Thyroid gland (tissue), 4 donors: ENCODE measurements at regions of chr9 and their contacts with region 1.

Region 1: DNA sequence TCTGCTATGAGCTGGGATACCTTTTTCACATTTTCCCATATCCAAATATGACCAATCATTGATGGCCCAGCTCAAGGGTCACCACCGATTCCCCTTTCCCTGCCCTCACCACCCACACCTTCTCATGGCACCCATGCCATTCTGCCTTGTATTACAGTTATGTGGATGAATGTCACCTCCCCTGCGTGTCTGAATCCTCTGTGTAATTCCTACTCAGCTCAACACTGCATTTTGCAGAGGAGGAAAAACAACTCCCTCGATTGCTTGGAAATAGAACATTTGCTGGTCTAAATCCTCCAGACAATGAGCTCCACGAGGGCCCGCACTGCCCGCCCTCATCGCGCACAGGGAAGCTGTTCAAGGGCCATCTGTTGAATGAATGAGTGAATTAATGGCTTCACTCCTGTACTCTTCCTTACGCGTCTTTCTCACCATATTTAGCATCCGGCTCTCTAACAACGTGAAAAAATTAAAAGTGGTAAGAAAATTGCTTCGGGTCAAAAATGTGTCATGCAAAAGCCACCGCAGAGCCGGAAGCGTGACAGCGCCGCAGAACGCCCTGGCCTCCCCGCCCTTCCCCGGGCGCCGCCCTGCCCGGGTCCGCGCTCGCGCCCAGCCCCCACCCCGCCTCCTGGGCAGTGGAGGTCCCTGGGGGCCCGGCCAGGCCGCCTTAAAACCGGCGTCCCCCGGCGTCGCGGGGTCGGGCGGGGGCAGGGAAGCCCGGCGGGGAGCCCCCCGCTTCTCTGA is 706 bp downstream of the SUSD1 start:
- DNase-seq: peak; percentile 58 to 61
- H3K4me3 ChIP-seq: peak overlapping the region in 2 of 3 donors; percentile 60 to 68
- H3K27ac ChIP-seq: no peak overlapping the region
- H3K4me1 ChIP-seq: peaks cover 5 to 19% of the 10 kb centered on the region in 2 donors
- H3K27me3 ChIP-seq: no peaks in the 10 kb centered on the region
- CTCF ChIP-seq: no peak
- POLR2A ChIP-seq: no peak

Region 2: GRCh38 chr9:111572950-111573604 is 601.3 kb before region 1 on chr9:
- intact Hi-C with region 1: no loop called
- DNase-seq: no peak
- H3K4me3 ChIP-seq: no peak overlapping the region
- H3K27ac ChIP-seq: no peak overlapping the region
- H3K4me1 ChIP-seq: no peaks in the 10 kb centered on the region
- H3K27me3 ChIP-seq: no peaks in the 10 kb centered on the region
- CTCF ChIP-seq: no peak
- POLR2A ChIP-seq: no peak

Region 3: GRCh38 chr9:112233768-112234167 is 59.4 kb after region 1 on chr9:
- intact Hi-C with region 1: no loop called
- DNase-seq: no peak
- H3K4me3 ChIP-seq: no peak overlapping the region
- H3K27ac ChIP-seq: no peak overlapping the region
- H3K4me1 ChIP-seq: no peaks in the 10 kb centered on the region
- H3K27me3 ChIP-seq: no peaks in the 10 kb centered on the region
- CTCF ChIP-seq: no peak
- POLR2A ChIP-seq: no peak

Region 4: GRCh38 chr9:112327718-112328464 is 153.5 kb after region 1 on chr9:
- intact Hi-C with region 1: loop called (anchors 10 kb)
- DNase-seq: no peak
- H3K4me3 ChIP-seq: no peak overlapping the region
- H3K27ac ChIP-seq: peak overlapping the region in 1 of 3 donors; percentile 1
- H3K4me1 ChIP-seq: peaks cover 14 to 15% of the 10 kb centered on the region in 2 donors
- H3K27me3 ChIP-seq: no peaks in the 10 kb centered on the region
- CTCF ChIP-seq: no peak
- POLR2A ChIP-seq: no peak